Natural killer cell (primary cell): ENCODE measurements at regions of chr13 and their contacts with region 1.

Region 1: DNA sequence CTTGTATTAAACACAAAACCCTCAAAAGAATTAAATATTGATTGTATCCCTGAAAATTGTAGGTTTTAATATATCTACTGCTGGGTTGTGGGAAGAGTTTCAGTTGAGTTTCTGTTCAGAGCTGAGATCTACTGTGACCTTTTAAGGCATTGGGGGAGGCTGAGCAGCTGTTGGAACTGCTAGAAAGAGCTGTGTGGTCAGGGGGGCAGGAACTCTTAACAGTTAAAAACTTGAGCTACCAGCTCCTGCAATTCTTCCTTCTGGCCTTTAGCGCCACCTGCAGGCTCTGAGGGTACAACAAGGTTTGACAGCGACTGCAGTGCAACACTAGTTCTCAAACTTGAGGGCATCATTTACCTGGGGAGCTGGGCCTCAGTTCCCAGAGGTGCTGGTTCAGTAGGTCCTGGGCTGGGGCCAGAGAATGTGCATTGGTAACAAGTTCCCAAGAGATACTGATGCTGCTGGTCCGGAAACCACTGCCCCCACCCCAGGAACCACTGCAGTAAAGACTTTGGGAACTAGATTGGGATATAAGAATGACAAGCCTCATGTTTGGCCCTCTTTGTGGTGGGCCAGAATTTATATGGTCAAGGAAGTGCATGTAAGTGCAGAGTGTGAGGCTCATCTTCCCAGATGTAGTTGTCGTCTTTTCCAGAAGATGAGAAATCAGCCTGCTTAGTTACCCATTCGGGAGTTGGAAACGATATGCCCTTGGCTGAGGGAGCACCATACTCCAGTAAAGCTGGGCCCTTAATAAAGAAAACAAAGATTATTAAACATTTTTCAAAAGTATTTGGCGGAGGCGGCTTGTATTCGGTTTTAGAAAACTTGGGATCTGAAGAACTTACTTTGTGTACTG is 2.6 kb downstream of the RNASEH2B start:
- DNase-seq: peak; percentile 89 to 95
- ATAC-seq: peak; percentile 67 to 82 (median 70)
- H3K4me3 ChIP-seq: peak overlapping the region; percentile 71
- H3K4me3 Mint-ChIP-seq: peak overlapping the region; percentile 79
- H3K27ac ChIP-seq: no peak overlapping the region
- H3K27ac Mint-ChIP-seq: peak overlapping the region; percentile 83 to 94
- H3K4me1 ChIP-seq: peaks cover 30% of the 10 kb centered on the region
- H3K4me1 Mint-ChIP-seq: peaks cover 53 to 57% of the 10 kb centered on the region in 2 donors
- H3K27me3 ChIP-seq: no peaks in the 10 kb centered on the region
- H3K27me3 Mint-ChIP-seq: no peaks in the 10 kb centered on the region
- CTCF ChIP-seq: peak; percentile 80

Region 2: DNA sequence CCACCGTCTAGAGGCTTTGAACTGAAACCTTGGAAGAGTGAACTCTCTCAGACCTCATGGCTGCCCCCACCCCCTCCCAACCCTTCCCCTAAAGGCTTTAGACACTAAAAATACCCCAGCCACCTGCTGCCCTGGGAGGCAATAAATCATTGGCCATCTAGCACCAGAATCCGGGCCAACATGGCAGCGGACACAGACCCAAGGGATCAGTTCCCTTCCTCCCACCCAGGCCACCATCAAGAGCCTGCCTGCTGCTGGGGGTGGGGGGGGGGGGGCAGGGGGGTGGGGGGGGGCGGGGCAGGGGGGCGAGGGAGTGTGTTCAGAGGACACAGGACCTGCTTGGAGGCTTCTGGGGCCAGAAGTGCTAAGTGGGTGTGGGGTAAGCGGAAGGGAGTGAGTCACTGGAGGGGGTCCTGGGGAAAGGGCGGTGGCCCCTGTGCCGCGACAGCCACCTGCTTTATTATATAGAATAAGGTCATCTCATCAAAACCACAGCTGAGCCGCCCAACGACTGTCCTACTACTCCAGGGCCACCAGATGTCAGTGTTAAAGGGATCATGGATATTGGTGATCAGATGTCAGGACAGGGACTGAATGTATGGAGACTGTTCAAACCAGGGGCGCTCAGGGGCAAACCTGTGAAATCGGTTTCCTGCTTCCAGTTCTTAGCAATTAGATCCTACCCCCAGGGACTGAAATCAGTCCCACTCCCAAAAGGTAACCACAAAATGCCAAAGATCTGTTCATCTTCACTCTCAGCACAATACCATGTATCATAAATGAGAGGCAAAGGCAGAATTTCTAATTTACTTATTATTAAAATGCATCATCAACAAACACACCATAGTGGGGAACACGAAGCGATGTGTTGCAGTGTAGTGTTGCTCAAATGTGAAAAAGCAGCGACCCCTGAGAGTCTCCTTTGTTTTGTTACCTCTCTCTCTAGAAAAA is 1259.5 kb before region 1 on chr13:
- intact Hi-C with region 1: loop called (anchors 10 kb)
- DNase-seq: peak in 1 of 2 donors; percentile 44
- ATAC-seq: peak; percentile 30 to 67 (median 54)
- H3K4me3 ChIP-seq: no peak overlapping the region
- H3K4me3 Mint-ChIP-seq: no peak overlapping the region
- H3K27ac ChIP-seq: no peak overlapping the region
- H3K27ac Mint-ChIP-seq: no peak overlapping the region
- H3K4me1 ChIP-seq: peaks cover 4% of the 10 kb centered on the region
- H3K4me1 Mint-ChIP-seq: peaks cover 0 to 5% of the 10 kb centered on the region in 2 donors
- H3K27me3 ChIP-seq: no peaks in the 10 kb centered on the region
- H3K27me3 Mint-ChIP-seq: no peaks in the 10 kb centered on the region
- CTCF ChIP-seq: peak; percentile 20

Region 3: GRCh38 chr13:49976314-49977258 is 935.6 kb before region 1 on chr13:
- intact Hi-C with region 1: loop called (anchors 1 kb)
- DNase-seq: peak; percentile 69 to 93
- ATAC-seq: peak; percentile 82 to 87 (median 83)
- H3K4me3 ChIP-seq: no peak overlapping the region
- H3K4me3 Mint-ChIP-seq: no peak overlapping the region
- H3K27ac ChIP-seq: no peak overlapping the region
- H3K27ac Mint-ChIP-seq: no peak overlapping the region
- H3K4me1 ChIP-seq: no peaks in the 10 kb centered on the region
- H3K4me1 Mint-ChIP-seq: no peaks in the 10 kb centered on the region
- H3K27me3 ChIP-seq: no peaks in the 10 kb centered on the region
- H3K27me3 Mint-ChIP-seq: no peaks in the 10 kb centered on the region
- CTCF ChIP-seq: peak; percentile 87

Region 4: DNA sequence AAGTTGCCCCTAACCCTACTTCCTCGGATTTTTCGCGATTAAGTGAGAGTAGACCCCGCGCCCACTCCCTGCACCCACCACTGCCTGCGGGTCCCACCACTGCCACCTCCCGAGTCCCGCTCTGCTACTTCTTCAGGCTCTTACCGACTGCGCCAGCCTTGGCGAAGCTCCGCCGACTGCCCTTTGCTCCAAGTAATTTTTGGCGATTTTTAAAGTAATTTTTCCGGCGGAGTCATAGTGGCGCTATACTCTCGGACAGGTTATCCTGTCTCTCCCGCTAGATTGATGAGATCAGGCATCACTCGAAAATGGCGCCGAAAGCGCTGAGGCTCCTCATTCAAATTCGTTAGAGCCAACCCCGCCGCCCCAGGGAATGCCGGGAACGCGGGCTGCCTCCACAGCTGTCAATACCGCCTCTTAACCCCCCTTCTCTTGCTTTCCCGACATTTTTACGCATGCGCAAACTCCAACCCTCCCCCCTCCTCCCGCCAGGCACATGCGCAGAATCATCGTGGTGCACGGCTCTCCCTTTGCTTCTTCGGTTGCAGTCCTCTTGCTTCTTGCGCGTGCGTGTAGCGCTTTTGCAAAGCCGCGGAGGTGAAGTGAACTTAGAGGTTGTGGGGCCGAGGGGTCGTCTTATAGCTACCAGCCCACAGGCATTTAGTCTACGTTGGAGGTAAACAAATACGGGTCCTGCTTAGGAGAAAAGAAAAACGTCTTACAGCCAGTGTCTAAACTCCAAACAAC is 830.3 kb before region 1 on chr13:
- intact Hi-C with region 1: loop called (anchors 2 kb)
- DNase-seq: peak; percentile 97 to 100
- ATAC-seq: peak; percentile 71 to 90 (median 79)
- H3K4me3 ChIP-seq: peak overlapping the region; percentile 79
- H3K4me3 Mint-ChIP-seq: peak overlapping the region; percentile 99
- H3K27ac ChIP-seq: peak overlapping the region; percentile 93
- H3K27ac Mint-ChIP-seq: peak overlapping the region; percentile 96 to 97
- H3K4me1 ChIP-seq: peaks cover 12% of the 10 kb centered on the region
- H3K4me1 Mint-ChIP-seq: peaks cover 44 to 56% of the 10 kb centered on the region in 2 donors
- H3K27me3 ChIP-seq: peaks cover 2% of the 10 kb centered on the region
- H3K27me3 Mint-ChIP-seq: peaks cover 0 to 3% of the 10 kb centered on the region in 2 donors
- CTCF ChIP-seq: no peak

Region 5: GRCh38 chr13:50531917-50532899 is 380.0 kb before region 1 on chr13:
- intact Hi-C with region 1: loop called (anchors 1 kb)
- DNase-seq: peak in 1 of 2 donors; percentile 44
- ATAC-seq: no peak
- H3K4me3 ChIP-seq: no peak overlapping the region
- H3K4me3 Mint-ChIP-seq: no peak overlapping the region
- H3K27ac ChIP-seq: no peak overlapping the region
- H3K27ac Mint-ChIP-seq: no peak overlapping the region
- H3K4me1 ChIP-seq: peaks cover 6% of the 10 kb centered on the region
- H3K4me1 Mint-ChIP-seq: no peaks in the 10 kb centered on the region
- H3K27me3 ChIP-seq: no peaks in the 10 kb centered on the region
- H3K27me3 Mint-ChIP-seq: peaks cover 0 to 14% of the 10 kb centered on the region in 2 donors
- CTCF ChIP-seq: peak; percentile 67

Region 6: DNA sequence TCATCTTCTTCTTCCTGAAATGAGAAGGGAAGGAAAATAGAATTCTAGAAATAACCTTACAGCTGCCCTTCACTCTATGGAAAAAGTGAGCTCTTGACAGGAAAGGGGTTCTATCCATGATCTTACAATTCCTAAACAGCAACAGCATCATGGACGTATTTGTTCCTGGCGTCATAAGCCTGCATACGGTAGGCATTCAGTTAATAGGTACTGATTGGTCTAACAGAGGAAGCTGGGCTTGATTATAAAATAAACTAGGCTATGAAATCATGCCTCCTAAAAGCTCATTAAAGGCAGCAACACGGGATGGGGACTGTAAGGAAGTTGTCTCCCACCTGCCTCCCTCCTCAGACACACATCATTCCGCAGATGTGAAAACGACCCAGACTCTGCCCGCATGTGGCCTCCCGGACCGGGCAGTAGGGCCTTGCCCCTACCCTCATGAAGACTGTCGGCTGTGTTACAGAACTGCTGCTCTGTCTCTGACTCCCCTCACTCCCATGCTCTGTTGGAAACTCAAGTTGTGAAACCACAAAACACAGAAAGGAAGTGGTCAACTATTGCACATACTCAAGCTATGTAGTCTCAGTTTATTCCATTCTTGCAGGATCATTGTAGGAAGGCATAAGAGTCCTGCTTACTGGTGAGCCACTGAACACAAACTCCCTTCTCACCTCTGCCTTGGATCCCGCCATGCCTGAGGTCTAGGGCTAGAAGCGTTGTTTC is 198.5 kb before region 1 on chr13:
- intact Hi-C with region 1: loop called (anchors 10 kb)
- DNase-seq: peak; percentile 32 to 63
- ATAC-seq: peak; percentile 94 to 99 (median 95)
- H3K4me3 ChIP-seq: peak overlapping the region; percentile 2
- H3K4me3 Mint-ChIP-seq: peak overlapping the region; percentile 86
- H3K27ac ChIP-seq: peak overlapping the region; percentile 4
- H3K27ac Mint-ChIP-seq: peak overlapping the region; percentile 1 to 79
- H3K4me1 ChIP-seq: peaks cover 20% of the 10 kb centered on the region
- H3K4me1 Mint-ChIP-seq: peaks cover 33 to 38% of the 10 kb centered on the region in 2 donors
- H3K27me3 ChIP-seq: peaks cover 5% of the 10 kb centered on the region
- H3K27me3 Mint-ChIP-seq: peaks cover 37 to 75% of the 10 kb centered on the region in 2 donors
- CTCF ChIP-seq: no peak

Region 7: DNA sequence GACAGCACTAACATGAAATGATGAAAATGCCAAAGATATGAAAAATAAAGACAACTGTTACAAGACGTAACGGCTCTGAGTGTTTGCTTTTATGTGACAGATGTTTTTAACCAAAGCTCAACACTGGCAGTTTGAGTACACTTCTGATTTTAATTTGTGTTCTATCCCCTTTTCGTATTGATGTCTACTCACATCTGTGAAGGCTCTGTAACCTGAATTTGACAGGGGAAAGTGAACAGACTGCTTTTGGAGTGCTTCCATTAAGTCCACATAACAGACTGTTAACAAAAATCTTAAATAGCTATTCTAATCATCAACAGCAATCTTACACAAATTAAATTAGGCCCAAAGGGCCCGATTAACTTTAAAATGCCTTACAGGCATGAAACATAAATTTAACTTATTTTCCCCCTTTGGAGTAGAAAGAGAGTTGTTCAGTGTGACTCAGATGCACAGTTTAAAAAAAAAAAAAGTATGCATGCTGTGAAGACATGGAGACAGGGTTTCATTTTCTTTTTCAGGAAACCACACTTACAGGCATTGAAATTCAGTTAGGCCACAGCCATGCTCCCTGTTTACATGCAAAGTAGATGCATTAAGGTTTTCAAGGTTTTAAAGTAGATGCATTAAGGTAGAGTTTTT is 18.8 kb before region 1 on chr13:
- intact Hi-C with region 1: loop called (anchors 2 kb)
- DNase-seq: peak in 1 of 2 donors; percentile 74
- ATAC-seq: peak; percentile 86 to 97 (median 95)
- H3K4me3 ChIP-seq: peak overlapping the region; percentile 19
- H3K4me3 Mint-ChIP-seq: peak overlapping the region; percentile 63
- H3K27ac ChIP-seq: peak overlapping the region; percentile 86
- H3K27ac Mint-ChIP-seq: peak overlapping the region; percentile 64 to 65
- H3K4me1 ChIP-seq: peaks cover 18% of the 10 kb centered on the region
- H3K4me1 Mint-ChIP-seq: peaks cover 36% of the 10 kb centered on the region in 2 donors
- H3K27me3 ChIP-seq: no peaks in the 10 kb centered on the region
- H3K27me3 Mint-ChIP-seq: peaks cover 0 to 2% of the 10 kb centered on the region in 2 donors
- CTCF ChIP-seq: no peak